ENCODE measurements at regions of chr11 and their contacts with region 1.

Region 1: GRCh38 chr11:57480409-57481137 is 20.2 kb downstream of the RTN4RL2 start:
- DNase-seq: peak in 2 of 4 donors; percentile 68 to 90
- ATAC-seq: peak; percentile 62
- H3K4me3 ChIP-seq: no peak overlapping the region
- H3K27ac ChIP-seq: no peak overlapping the region
- H3K4me1 ChIP-seq: peaks cover 21 to 58% of the 10 kb centered on the region in 2 donors
- H3K27me3 ChIP-seq: peaks cover 5 to 54% of the 10 kb centered on the region in 2 donors
- CTCF ChIP-seq: peak; percentile 57 to 72

Region 2: GRCh38 chr11:57345555-57346211 is 134.9 kb before region 1 on chr11:
- intact Hi-C with region 1: loop called in 1 of 2 experiments (anchors 5 kb)
- DNase-seq: peak in 2 of 4 donors; percentile 57 to 65
- ATAC-seq: peak; percentile 92
- H3K4me3 ChIP-seq: no peak overlapping the region
- H3K27ac ChIP-seq: no peak overlapping the region
- H3K4me1 ChIP-seq: peaks cover 0 to 16% of the 10 kb centered on the region in 2 donors
- H3K27me3 ChIP-seq: no peaks in the 10 kb centered on the region
- CTCF ChIP-seq: peak; percentile 83 to 94

Region 3: GRCh38 chr11:57358543-57358961 is 122.0 kb before region 1 on chr11:
- intact Hi-C with region 1: no loop called
- DNase-seq: peak in 1 of 4 donors; percentile 9
- ATAC-seq: no peak
- H3K4me3 ChIP-seq: no peak overlapping the region
- H3K27ac ChIP-seq: no peak overlapping the region
- H3K4me1 ChIP-seq: no peaks in the 10 kb centered on the region
- H3K27me3 ChIP-seq: no peaks in the 10 kb centered on the region
- CTCF ChIP-seq: no peak

Region 4: GRCh38 chr11:57530596-57531507 is 50.3 kb after region 1 on chr11 and contains the start of gene TIMM10:
- intact Hi-C with region 1: no loop called
- DNase-seq: peak; percentile 94 to 98 (median 96)
- ATAC-seq: peak; percentile 96
- H3K4me3 ChIP-seq: peak within 1 kb of the TSS; percentile 68 to 82
- H3K27ac ChIP-seq: peak within 1 kb of the TSS; percentile 47 to 76
- H3K4me1 ChIP-seq: peaks cover 10 to 26% of the 10 kb centered on the region in 2 donors
- H3K27me3 ChIP-seq: no peaks in the 10 kb centered on the region
- CTCF ChIP-seq: no peak
- polyA plus RNA-seq, gene TIMM10: 26.5 to 41.0 (median 33.6) TPM